ENCODE measurements at regions of chr4 and their contacts with region 1.

Region 1: DNA sequence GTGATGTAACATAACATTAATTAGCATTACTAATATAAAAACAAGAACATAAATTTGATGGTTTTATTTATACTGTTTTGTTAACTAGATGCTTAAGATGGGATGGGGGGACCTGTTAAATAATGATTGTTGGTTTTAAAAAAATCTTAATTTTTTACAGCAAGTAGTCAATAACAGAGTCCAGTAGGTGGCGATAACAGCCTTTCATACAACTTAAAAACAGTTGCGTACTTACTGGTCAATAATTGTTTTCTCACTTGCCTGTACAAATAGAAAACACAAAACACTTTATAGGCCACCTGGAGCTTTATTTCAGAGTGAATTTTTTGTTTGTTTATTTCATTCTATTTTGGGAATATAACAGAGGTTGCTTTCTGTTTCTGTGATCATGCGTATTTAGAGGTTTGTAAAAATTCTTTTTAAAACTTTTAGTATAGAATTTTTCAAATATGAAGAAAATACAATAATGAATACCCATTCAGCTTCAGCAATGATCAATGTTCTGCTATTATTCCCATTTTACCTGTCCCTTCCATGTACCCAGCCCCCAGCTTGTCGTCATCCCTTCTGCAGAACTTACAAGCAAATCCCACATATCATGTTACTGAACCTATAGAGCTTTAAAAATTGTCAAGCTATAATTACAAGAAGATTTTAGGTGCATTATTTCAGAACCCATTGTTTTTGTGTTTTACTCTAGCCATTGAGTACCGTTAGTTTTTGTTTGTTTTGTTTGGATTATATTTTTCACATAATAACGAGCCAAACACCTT is 97.1 kb downstream of the MRPL1 start:
- DNase-seq: peak; percentile 46 to 68
- H3K4me3 ChIP-seq: no peak overlapping the region
- H3K4me1 ChIP-seq: peaks cover 19% of the 10 kb centered on the region
- H3K27me3 ChIP-seq: no peaks in the 10 kb centered on the region

Region 2: DNA sequence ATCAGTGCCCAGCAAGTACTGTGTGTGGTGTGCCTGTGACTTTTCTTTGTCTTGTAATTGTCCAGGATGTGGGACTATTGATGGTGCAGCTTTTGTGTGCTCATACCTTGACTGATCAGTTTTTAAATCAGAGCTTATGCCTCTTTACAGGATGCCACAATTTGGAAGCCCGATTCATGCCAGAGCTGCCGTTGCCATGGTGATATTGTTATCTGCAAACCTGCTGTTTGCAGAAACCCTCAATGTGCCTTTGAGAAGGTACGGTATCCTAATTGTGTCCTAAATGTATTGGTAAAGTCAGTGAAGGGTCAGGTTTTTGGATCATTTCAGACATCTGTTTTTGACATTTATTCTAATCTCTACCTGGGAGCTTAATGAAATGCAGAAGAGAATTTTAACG is 277.6 kb after region 1 on chr4:
- in situ Hi-C with region 1: no loop called
- DNase-seq: no peak
- H3K4me3 ChIP-seq: no peak overlapping the region
- H3K4me1 ChIP-seq: no peaks in the 10 kb centered on the region
- H3K27me3 ChIP-seq: no peaks in the 10 kb centered on the region

Region 3: DNA sequence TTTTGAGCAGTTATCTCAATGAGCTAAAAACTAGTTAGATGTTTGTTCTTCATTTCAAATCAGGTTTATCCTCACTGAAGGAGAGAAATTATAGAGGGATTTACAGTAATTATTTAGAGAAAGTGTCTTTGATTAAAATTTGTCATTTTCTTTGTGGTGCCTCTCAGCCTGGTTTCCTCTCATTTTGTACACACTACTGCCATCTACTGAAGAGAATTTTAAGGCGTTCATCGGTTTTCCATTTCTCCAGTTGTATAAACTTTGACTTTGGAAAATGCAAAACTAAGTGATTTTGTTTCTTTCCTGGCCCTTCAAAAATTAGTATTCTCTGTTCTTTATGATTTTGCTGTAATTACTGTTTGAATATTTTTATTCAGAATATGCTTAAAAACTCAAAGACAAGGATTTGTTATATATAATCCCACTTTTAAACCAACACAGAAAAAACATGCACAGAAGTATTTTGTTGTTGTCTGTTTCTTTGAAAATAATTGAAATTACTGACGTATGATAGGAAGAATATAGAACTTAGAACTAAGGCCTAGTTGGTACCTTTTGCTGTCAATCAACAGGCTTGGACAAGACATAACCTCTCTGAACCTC is 557.4 kb after region 1 on chr4:
- in situ Hi-C with region 1: loop called (anchors 25 kb)
- DNase-seq: peak in 1 of 2 experiments; percentile 57
- H3K4me3 ChIP-seq: no peak overlapping the region
- H3K4me1 ChIP-seq: no peaks in the 10 kb centered on the region
- H3K27me3 ChIP-seq: no peaks in the 10 kb centered on the region

Region 4: DNA sequence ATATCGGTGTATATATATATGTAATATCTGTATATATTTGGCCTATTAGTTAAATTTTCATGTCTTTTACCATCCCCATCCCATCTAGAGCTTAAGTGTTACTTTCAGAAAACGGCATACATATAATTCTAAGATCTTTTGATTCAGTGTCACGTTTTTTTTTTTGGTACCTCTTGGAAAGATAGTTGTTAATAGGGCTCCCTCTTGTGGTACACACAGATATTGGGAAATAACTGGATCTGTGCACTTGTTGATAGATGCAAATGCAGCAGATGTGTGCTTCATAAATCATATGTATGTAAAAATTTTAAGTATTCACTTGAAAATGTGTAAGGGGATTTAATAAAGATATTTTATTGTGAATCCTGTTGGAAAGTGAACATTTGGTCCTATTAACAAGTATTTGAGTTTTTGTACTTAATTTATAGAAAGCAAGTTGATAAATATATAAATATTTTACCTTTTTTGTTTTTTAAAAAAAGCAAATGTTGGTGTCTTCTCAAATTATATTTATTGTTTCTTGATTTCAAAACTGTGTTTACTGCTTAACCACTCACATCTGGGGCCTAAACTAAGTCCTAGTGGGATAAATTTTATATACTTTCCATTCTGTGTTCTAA is 904.8 kb after region 1 on chr4:
- in situ Hi-C with region 1: loop called (anchors 25 kb)
- DNase-seq: peak; percentile 40 to 66
- H3K4me3 ChIP-seq: no peak overlapping the region
- H3K4me1 ChIP-seq: no peaks in the 10 kb centered on the region
- H3K27me3 ChIP-seq: no peaks in the 10 kb centered on the region; the same call in 1 of the 2 replicates

Region 5: DNA sequence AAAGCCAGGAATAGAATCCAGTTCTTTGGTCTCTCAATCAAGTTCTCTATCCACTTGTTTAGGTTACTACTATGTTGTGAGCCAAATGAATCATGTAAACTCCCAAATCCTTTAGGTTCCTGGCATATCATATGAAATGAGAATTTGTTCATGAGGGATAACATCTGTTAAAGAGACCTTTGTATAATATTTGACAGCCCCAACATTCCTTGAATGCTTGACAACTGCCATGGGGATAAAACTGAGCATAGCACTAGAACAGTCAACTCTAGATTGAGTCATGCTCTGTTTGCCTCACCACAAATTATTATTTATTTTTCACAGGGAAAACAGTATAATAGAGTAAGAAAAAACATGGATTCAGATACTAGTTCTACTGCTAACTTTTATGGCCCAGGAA is 1272.8 kb after region 1 on chr4:
- in situ Hi-C with region 1: no loop called
- DNase-seq: no peak
- H3K4me3 ChIP-seq: no peak overlapping the region
- H3K4me1 ChIP-seq: no peaks in the 10 kb centered on the region
- H3K27me3 ChIP-seq: no peaks in the 10 kb centered on the region

Measured in HAP-1 (cell line).